Left cardiac atrium (tissue), 4 donors: ENCODE measurements at regions of chr10 and their contacts with region 1.

Region 1: GRCh38 chr10:113052076-113052830 is 102.2 kb downstream of the TCF7L2 start:
- DNase-seq: no peak
- ATAC-seq: peak in 1 of 2 donors; percentile 35

Region 2: DNA sequence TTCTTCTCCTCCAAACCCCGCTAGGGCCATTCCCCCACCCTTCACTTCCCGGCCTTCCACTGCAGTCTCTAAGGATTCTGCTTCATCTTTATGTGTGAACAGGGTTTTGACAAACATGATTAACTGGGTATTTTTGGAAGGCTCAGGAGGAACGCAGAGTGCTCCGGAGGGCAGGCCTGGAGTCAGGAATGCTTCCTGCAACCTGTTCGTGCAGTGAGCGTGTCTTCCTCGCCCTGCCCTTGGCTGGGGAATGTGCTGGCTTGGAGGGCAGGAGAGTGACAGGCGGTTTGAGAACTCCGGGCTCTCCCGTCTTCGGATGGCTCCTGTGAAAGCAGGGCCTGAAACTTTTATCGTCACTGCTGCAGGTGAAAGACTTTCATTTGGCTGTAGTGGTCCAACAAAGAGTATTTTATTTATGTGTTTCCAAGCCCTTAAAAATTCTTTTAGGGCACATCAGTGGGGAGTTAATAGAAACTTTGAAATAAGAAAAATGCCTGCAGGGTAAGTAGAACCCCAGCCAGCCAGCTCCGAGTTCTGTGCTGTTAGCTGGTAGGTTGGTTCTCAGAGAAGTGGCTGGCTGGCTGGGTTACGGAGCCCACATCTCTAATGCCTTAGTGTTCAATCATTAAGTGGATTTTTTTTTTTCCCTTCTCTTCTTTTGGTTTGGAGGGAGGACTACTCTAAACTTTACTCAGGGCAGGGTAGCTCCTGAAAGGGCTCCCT is 51.2 kb before region 1 on chr10:
- intact Hi-C with region 1: loop called in 1 of 2 experiments (anchors 10 kb)
- DNase-seq: peak; percentile 38
- ATAC-seq: peak; percentile 77 to 86